CD4-positive, alpha-beta T cell (primary cell): ENCODE measurements at regions of chr18 and their contacts with region 1.

Region 1: GRCh38 chr18:64165906-64166305 is 17.0 kb upstream of the LINC00305 start:
- DNase-seq: no peak
- ATAC-seq: no peak
- H3K4me3 ChIP-seq: no peak overlapping the region
- H3K4me3 Mint-ChIP-seq: no peak overlapping the region
- H3K27ac ChIP-seq: no peak overlapping the region
- H3K27ac Mint-ChIP-seq: no peak overlapping the region
- H3K4me1 ChIP-seq: no peaks in the 10 kb centered on the region
- H3K4me1 Mint-ChIP-seq: no peaks in the 10 kb centered on the region
- H3K27me3 ChIP-seq: no peaks in the 10 kb centered on the region
- H3K27me3 Mint-ChIP-seq: no peaks in the 10 kb centered on the region
- CTCF ChIP-seq: no peak

Region 2: DNA sequence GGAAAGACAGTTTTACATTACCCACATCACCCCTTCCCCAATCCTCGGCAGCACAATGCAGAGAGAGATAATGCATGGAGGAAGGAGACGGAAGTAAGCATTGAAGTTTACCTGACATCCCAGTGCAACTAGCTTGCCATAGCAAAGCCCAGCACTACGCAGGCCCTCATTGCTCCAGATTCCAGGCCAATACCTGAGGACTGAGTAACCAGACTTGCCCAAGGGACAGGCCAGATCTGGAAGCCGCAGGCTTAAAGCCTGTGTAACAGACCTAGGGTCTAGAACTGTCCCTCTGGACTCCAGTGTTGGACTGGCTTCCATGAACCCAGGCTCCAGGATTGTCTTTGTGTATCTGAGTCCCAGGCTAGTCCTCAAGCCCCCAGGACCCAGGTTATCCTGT is 539.5 kb before region 1 on chr18:
- CTCF ChIA-PET with region 1: no interaction called
- POLR2A ChIA-PET with region 1: no interaction called
- intact Hi-C with region 1: no loop called
- DNase-seq: no peak
- ATAC-seq: no peak
- H3K4me3 ChIP-seq: no peak overlapping the region
- H3K4me3 Mint-ChIP-seq: no peak overlapping the region
- H3K27ac ChIP-seq: no peak overlapping the region
- H3K27ac Mint-ChIP-seq: no peak overlapping the region
- H3K4me1 ChIP-seq: no peaks in the 10 kb centered on the region
- H3K4me1 Mint-ChIP-seq: no peaks in the 10 kb centered on the region
- H3K27me3 ChIP-seq: peaks cover 0 to 2% of the 10 kb centered on the region in 2 experiments
- H3K27me3 Mint-ChIP-seq: no peaks in the 10 kb centered on the region
- CTCF ChIP-seq: no peak

Region 3: DNA sequence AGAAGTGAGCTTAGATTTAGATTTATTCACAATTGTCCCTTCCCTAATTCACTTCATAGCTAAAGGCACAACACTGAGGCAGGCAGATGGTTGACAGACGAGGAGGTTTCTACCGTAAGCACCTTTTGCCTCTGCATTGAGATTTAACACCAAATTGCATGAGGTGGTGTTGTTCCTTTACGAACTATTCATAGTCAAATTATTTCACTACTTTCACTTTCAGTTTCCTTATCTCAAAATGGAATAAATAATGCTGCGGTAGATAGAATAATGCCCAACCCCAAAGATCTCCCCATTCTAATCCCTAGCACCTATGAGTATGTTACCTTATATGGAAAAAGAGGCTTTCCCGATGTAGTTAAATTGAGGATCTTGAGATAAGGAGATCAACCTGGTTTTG is 41.9 kb after region 1 on chr18:
- CTCF ChIA-PET with region 1: no interaction called
- POLR2A ChIA-PET with region 1: no interaction called
- intact Hi-C with region 1: loop called in 1 of 2 experiments (anchors 1 kb)
- DNase-seq: peak in 1 of 14 experiments; percentile 8
- ATAC-seq: no peak
- H3K4me3 ChIP-seq: peak overlapping the region; percentile 35
- H3K4me3 Mint-ChIP-seq: peak overlapping the region; percentile 36
- H3K27ac ChIP-seq: no peak overlapping the region
- H3K27ac Mint-ChIP-seq: no peak overlapping the region
- H3K4me1 ChIP-seq: peaks cover 3% of the 10 kb centered on the region
- H3K4me1 Mint-ChIP-seq: peaks cover 16% of the 10 kb centered on the region
- H3K27me3 ChIP-seq: no peaks in the 10 kb centered on the region
- H3K27me3 Mint-ChIP-seq: no peaks in the 10 kb centered on the region
- CTCF ChIP-seq: no peak